ENCODE measurements at regions of chr4 and their contacts with region 1.

Region 1: DNA sequence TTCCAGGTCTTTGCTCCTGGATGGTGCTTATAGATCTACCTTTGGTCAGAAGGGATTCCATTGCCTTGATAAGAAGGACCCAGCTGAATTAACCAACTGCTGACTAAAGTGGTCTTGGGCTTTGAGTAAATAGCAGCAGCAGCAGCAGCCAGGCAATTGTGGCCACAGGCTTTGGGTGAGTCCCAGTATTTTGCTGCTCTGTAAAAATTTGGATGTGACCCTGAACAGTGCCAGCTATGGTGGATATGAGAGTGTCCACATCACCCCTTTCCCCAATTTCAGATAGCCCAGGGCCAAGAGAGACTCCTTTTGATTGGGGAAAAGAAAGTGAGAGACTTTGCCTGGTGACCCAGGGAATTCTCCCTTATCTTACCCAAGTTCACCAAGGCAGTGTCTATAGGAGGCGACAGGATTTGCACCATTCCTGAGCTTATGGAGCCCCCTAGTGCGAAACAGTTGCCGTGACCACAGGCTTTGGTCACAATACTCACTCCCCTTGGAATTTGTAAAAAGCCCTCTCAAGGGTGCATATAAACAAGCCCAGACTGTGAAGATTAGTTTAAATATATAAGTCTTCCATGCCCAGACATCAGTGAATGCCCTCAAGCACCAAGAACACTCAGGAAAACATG is 518.0 kb downstream of the TMA16 start:
- DNase-seq: peak; percentile 52
- H3K4me3 Mint-ChIP-seq: no peak overlapping the region
- H3K27ac Mint-ChIP-seq: no peak overlapping the region
- H3K4me1 Mint-ChIP-seq: peaks cover 5% of the 10 kb centered on the region
- H3K27me3 Mint-ChIP-seq: no peaks in the 10 kb centered on the region

Region 2: DNA sequence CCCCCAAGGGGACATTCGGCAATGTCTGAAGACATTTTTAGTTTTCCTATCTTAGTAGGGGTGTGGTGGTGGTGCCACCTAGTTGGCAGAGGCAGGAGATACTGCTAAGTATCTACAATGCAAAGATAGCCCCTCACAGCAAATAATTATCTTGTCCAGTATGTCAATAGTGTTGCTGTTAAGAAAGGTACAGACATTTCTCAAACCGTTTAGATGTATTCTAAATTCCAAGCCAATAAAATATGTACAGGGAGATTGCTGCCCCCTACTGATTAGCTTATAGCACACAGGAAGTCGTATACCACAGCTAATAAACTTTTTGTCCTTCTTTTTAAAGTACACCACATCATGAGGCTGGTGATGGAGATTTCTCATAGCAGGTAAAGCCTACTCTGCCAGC is 257.5 kb before region 1 on chr4:
- CTCF ChIA-PET with region 1: interaction called, 3 read pairs
- intact Hi-C with region 1: loop called (anchors 5 kb)
- DNase-seq: no peak
- H3K4me3 Mint-ChIP-seq: no peak overlapping the region
- H3K27ac Mint-ChIP-seq: no peak overlapping the region
- H3K4me1 Mint-ChIP-seq: peaks cover 2% of the 10 kb centered on the region
- H3K27me3 Mint-ChIP-seq: no peaks in the 10 kb centered on the region

Region 3: GRCh38 chr4:163815776-163816175 is 196.7 kb before region 1 on chr4:
- CTCF ChIA-PET with region 1: no interaction called
- intact Hi-C with region 1: loop called (anchors 2 kb)
- DNase-seq: no peak
- H3K4me3 Mint-ChIP-seq: no peak overlapping the region
- H3K27ac Mint-ChIP-seq: no peak overlapping the region
- H3K4me1 Mint-ChIP-seq: no peaks in the 10 kb centered on the region
- H3K27me3 Mint-ChIP-seq: no peaks in the 10 kb centered on the region

Region 4: GRCh38 chr4:164023214-164023613 is 10.7 kb after region 1 on chr4:
- CTCF ChIA-PET with region 1: no interaction called
- intact Hi-C with region 1: no loop called
- DNase-seq: no peak
- H3K4me3 Mint-ChIP-seq: no peak overlapping the region
- H3K27ac Mint-ChIP-seq: no peak overlapping the region
- H3K4me1 Mint-ChIP-seq: no peaks in the 10 kb centered on the region
- H3K27me3 Mint-ChIP-seq: no peaks in the 10 kb centered on the region

Region 5: GRCh38 chr4:164177153-164177552 is 164.6 kb after region 1 on chr4:
- CTCF ChIA-PET with region 1: no interaction called
- intact Hi-C with region 1: no loop called
- DNase-seq: no peak
- H3K4me3 Mint-ChIP-seq: no peak overlapping the region
- H3K27ac Mint-ChIP-seq: no peak overlapping the region
- H3K4me1 Mint-ChIP-seq: no peaks in the 10 kb centered on the region
- H3K27me3 Mint-ChIP-seq: no peaks in the 10 kb centered on the region

Region 6: GRCh38 chr4:164287173-164287572 is 274.7 kb after region 1 on chr4:
- CTCF ChIA-PET with region 1: no interaction called
- intact Hi-C with region 1: no loop called
- DNase-seq: no peak
- H3K4me3 Mint-ChIP-seq: no peak overlapping the region
- H3K27ac Mint-ChIP-seq: no peak overlapping the region
- H3K4me1 Mint-ChIP-seq: no peaks in the 10 kb centered on the region
- H3K27me3 Mint-ChIP-seq: no peaks in the 10 kb centered on the region

Measured in activated naive CD4-positive, alpha-beta T cell treated with anti-CD3 and anti-CD28 coated beads for 36 hours (primary cell).